GM13977 (cell line): ENCODE measurements at regions of chr12 and their contacts with region 1.

Region 1: DNA sequence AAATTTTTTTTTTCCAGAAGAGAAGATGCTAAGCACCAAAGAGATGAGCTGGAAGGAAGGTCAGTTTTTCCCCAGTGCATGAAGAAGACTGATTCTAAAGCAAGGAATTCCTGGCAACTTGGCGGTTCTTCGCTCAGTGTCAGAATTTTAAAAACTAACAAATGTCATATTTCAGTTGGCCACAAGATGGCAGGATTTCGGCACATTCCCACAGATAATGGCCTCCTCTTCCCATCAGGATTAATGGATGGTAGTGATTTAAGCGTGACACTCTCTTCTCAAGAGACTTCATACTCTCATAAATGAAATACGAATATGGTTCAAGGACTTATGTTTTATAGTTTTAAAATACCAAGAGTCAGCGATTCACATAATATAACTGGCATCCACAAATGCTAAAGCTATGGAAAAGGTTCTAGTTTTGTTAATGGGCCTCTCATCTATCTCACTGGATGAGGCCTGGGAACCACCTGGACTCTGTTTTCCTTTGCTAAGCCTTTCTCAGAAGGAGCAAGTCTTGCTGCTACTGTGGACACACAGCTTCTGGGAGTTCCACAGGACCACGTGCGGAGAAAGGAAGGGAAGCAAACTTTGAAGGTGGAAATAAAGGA is 46.1 kb upstream of the PTPRO start:
- DNase-seq: no peak
- CTCF ChIP-seq: peak; percentile 65

Region 2: GRCh38 chr12:15522565-15523187 is 246.5 kb after region 1 on chr12:
- in situ Hi-C with region 1: loop called (anchors 10 kb)
- DNase-seq: peak; percentile 26
- CTCF ChIP-seq: peak; percentile 52